Upper lobe of right lung (tissue), 1 donor: ENCODE measurements at regions of chr6 and their contacts with region 1.

Region 1: GRCh38 chr6:73608761-73609160 is 45.0 kb downstream of the SLC17A5 start:
- DNase-seq: no peak
- ATAC-seq: no peak
- H3K4me3 ChIP-seq: no peak overlapping the region
- H3K27ac ChIP-seq: no peak overlapping the region
- H3K4me1 ChIP-seq: no peaks in the 10 kb centered on the region
- H3K27me3 ChIP-seq: no peaks in the 10 kb centered on the region
- CTCF ChIP-seq: no peak

Region 2: GRCh38 chr6:73519926-73520687 is 88.7 kb before region 1 on chr6:
- intact Hi-C with region 1: loop called (anchors 5 kb)
- DNase-seq: peak; percentile 89
- ATAC-seq: peak; percentile 57
- H3K4me3 ChIP-seq: peak overlapping the region; percentile 99
- H3K27ac ChIP-seq: peak overlapping the region; percentile 100
- H3K4me1 ChIP-seq: peaks cover 53% of the 10 kb centered on the region
- H3K27me3 ChIP-seq: no peaks in the 10 kb centered on the region
- CTCF ChIP-seq: no peak